ENCODE measurements at regions of chr3 and their contacts with region 1.

Region 1: GRCh38 chr3:84567796-84568195 is 391.0 kb upstream of the CADM2 start:
- DNase-seq: no peak
- H3K4me3 ChIP-seq: no peak overlapping the region
- H3K27ac ChIP-seq: no peak overlapping the region
- H3K4me1 ChIP-seq: no peaks in the 10 kb centered on the region
- CTCF ChIP-seq: no peak

Region 2: GRCh38 chr3:84601303-84601702 is 33.5 kb after region 1 on chr3:
- CTCF ChIA-PET with region 1: no interaction called
- POLR2A ChIA-PET with region 1: no interaction called
- intact Hi-C with region 1: loop called (anchors 1 kb)
- DNase-seq: peak; percentile 8
- H3K4me3 ChIP-seq: no peak overlapping the region
- H3K27ac ChIP-seq: no peak overlapping the region
- H3K4me1 ChIP-seq: no peaks in the 10 kb centered on the region
- CTCF ChIP-seq: no peak

Region 3: GRCh38 chr3:84637272-84637671 is 69.5 kb after region 1 on chr3:
- CTCF ChIA-PET with region 1: no interaction called
- POLR2A ChIA-PET with region 1: no interaction called
- intact Hi-C with region 1: no loop called
- DNase-seq: no peak
- H3K4me3 ChIP-seq: no peak overlapping the region
- H3K27ac ChIP-seq: no peak overlapping the region
- H3K4me1 ChIP-seq: no peaks in the 10 kb centered on the region
- CTCF ChIP-seq: no peak

Measured in OCI-LY7 (cell line).